Motor neuron (in vitro differentiated cells): ENCODE measurements at regions of chr1 and their contacts with region 1.

Region 1: GRCh38 chr1:35715568-35716002 is 3.1 kb downstream of the C1orf216 start:
- ATAC-seq: peak; percentile 12 to 86 (median 77)
- H3K4me3 ChIP-seq: no peak overlapping the region
- H3K27ac ChIP-seq: no peak overlapping the region
- H3K4me1 ChIP-seq: peaks cover 6 to 16% of the 10 kb centered on the region in 2 donors

Region 2: DNA sequence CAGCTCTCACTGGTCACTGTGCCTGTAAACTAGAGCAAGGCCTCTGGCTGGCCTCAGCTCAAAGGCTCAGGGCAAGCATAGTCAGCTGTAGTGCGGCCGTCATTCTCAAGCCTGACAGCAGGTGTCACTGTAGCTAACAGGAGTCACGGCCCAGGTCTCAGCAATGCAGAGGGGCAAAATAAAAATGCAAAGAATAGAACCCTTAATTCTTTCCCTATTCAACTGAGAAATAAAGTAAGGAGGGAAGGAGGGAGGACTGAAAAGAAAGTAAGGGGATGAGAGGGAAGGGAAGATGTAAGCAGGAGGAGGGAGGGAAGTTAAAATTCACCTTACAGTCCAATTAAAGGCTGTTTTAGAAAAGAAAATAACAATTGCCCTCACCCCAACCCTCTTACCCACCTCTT is 264.5 kb before region 1 on chr1:
- in situ Hi-C with region 1: loop called in 1 of 9 experiments (anchors 25 kb)
- ATAC-seq: peak; percentile 39 to 88 (median 85)
- H3K4me3 ChIP-seq: no peak overlapping the region
- H3K27ac ChIP-seq: no peak overlapping the region
- H3K4me1 ChIP-seq: no peaks in the 10 kb centered on the region

Region 3: GRCh38 chr1:35557292-35558063 is 158.1 kb before region 1 on chr1 and contains the starts of genes KIAA0319L and NCDN:
- in situ Hi-C with region 1: loop called in 5 of 9 experiments (anchors 10 to 25 kb)
- ATAC-seq: peak; percentile 84 to 91 (median 85)
- H3K4me3 ChIP-seq: peak within 1 kb of the TSS; percentile 68 to 93 (median 86)
- H3K27ac ChIP-seq: peak within 1 kb of the TSS; percentile 98 to 99
- H3K4me1 ChIP-seq: peaks cover 27 to 30% of the 10 kb centered on the region in 2 donors
- total RNA-seq, gene KIAA0319L: 48.2 to 71.6 (median 58.0) TPM
- total RNA-seq, gene NCDN: 37.4 to 57.6 (median 50.3) TPM

Region 4: GRCh38 chr1:35577071-35577998 is 138.2 kb before region 1 on chr1:
- in situ Hi-C with region 1: loop called in 5 of 9 experiments (anchors 10 to 25 kb)
- ATAC-seq: peak in 4 of 8 experiments; percentile 2 to 13 (median 8)
- H3K4me3 ChIP-seq: no peak overlapping the region
- H3K27ac ChIP-seq: no peak overlapping the region
- H3K4me1 ChIP-seq: peaks cover 0 to 6% of the 10 kb centered on the region in 2 donors